ENCODE measurements at regions of chr2 and their contacts with region 1.

Region 1: DNA sequence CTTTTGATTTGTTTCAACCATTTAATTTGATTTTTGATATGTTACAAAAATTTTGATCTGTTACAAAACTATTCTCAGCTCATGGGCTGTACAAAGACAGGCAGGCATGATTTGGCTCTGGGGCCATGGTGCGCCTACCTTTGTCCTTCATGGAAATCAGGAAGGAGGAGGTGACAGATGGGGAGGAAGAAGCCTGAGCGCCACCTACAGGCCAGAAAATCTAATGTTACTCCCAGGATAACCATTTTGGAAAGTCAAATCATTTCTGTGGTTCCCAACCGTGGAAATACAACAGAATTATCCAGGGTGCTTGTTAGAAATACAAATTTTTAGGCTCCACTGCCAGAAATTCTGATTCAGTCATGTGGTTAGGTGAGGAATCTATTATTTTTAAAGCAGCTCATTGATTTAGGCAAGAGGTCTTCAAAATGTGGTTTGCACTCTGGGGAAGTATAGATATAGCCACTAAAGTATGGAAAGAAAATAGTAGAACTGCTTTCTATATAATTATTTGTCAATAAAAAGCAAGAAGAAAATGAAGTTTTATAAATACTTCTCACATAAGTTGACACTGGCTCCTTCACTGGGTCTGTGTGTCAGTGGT is 93.9 kb downstream of the EVA1A start:
- DNase-seq: peak; percentile 17
- ATAC-seq: no peak
- H3K4me3 Mint-ChIP-seq: no peak overlapping the region
- H3K27ac Mint-ChIP-seq: no peak overlapping the region
- H3K4me1 Mint-ChIP-seq: peaks cover 3% of the 10 kb centered on the region
- H3K27me3 Mint-ChIP-seq: peaks cover 13% of the 10 kb centered on the region
- CTCF ChIP-seq: peak; percentile 77

Region 2: DNA sequence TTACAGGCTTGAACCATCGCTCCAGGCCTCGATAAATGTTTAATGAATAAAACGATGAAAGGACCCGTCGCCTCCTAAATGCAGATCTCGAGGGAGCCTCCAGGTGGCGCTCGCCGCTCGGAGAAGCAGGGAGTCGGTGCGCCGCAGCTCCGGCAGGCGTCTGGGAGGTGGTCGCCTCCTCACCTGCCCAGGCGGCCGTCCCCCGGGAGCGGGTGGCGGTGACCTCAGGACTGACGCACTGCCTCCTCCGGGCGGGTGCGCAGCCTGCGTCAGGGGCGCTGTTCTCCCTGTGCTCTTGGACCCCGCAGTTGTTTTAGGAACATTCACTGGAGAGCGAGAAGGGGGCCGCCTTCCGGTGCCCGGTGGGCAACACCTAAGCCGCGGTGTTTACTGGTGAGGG is 547.0 kb before region 1 on chr2:
- CTCF ChIA-PET with region 1: interaction called, 3 read pairs
- POLR2A ChIA-PET with region 1: no interaction called
- intact Hi-C with region 1: loop called (anchors 1 kb)
- DNase-seq: peak; percentile 72
- ATAC-seq: peak; percentile 88
- H3K4me3 Mint-ChIP-seq: peak overlapping the region; percentile 42
- H3K27ac Mint-ChIP-seq: no peak overlapping the region
- H3K4me1 Mint-ChIP-seq: peaks cover 14% of the 10 kb centered on the region
- H3K27me3 Mint-ChIP-seq: peaks cover 10% of the 10 kb centered on the region
- CTCF ChIP-seq: peak; percentile 57

Region 3: DNA sequence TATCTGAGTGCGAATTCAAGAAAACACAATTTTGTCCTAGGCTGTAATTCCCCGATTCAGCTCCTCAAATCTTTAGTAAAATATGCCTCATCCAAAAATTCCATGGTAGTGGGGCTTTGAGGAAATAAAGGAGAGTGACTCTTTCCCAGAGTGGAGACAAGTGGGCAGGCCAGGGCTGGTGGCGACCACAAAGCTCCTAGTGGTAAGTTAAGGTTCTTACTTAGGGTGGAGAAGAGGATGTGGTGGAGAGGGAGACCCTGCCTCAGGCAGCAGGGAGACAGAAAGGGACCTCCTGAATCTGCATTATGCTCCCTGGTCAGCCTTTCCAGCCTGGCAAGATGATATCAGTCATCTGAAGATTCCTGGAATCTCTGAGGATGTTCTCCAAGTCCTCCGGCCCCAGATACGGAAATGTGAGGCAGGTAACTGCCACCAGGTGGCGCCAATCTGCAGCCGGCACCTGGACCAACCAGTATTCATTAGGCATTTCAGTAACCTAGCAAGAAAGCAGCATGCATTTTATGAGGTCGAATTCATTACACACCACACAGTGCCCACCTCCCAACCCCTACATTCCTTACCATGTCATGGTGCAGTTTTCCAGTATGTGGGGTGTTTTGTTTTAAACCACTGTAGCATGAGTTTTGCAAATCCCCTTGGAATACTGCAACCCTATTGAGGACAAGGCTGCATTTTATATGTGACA is 402.0 kb before region 1 on chr2:
- CTCF ChIA-PET with region 1: interaction called, 16 read pairs
- POLR2A ChIA-PET with region 1: no interaction called
- intact Hi-C with region 1: loop called (anchors 1 kb)
- DNase-seq: peak; percentile 42
- ATAC-seq: no peak
- H3K4me3 Mint-ChIP-seq: no peak overlapping the region
- H3K27ac Mint-ChIP-seq: no peak overlapping the region
- H3K4me1 Mint-ChIP-seq: no peaks in the 10 kb centered on the region
- H3K27me3 Mint-ChIP-seq: no peaks in the 10 kb centered on the region
- CTCF ChIP-seq: peak; percentile 56

Region 4: GRCh38 chr2:75311993-75312392 is 154.8 kb before region 1 on chr2:
- CTCF ChIA-PET with region 1: interaction called, 3 read pairs
- POLR2A ChIA-PET with region 1: no interaction called
- intact Hi-C with region 1: loop called (anchors 1 kb)
- DNase-seq: peak; percentile 38
- ATAC-seq: peak; percentile 100
- H3K4me3 Mint-ChIP-seq: no peak overlapping the region
- H3K27ac Mint-ChIP-seq: peak overlapping the region; percentile 3
- H3K4me1 Mint-ChIP-seq: peaks cover 17% of the 10 kb centered on the region
- H3K27me3 Mint-ChIP-seq: no peaks in the 10 kb centered on the region
- CTCF ChIP-seq: no peak

Region 5: GRCh38 chr2:75574114-75574513 is 107.3 kb after region 1 on chr2:
- CTCF ChIA-PET with region 1: no interaction called
- POLR2A ChIA-PET with region 1: no interaction called
- intact Hi-C with region 1: no loop called
- DNase-seq: no peak
- ATAC-seq: no peak
- H3K4me3 Mint-ChIP-seq: no peak overlapping the region
- H3K27ac Mint-ChIP-seq: no peak overlapping the region
- H3K4me1 Mint-ChIP-seq: no peaks in the 10 kb centered on the region
- H3K27me3 Mint-ChIP-seq: peaks cover 29% of the 10 kb centered on the region
- CTCF ChIP-seq: no peak

Region 6: DNA sequence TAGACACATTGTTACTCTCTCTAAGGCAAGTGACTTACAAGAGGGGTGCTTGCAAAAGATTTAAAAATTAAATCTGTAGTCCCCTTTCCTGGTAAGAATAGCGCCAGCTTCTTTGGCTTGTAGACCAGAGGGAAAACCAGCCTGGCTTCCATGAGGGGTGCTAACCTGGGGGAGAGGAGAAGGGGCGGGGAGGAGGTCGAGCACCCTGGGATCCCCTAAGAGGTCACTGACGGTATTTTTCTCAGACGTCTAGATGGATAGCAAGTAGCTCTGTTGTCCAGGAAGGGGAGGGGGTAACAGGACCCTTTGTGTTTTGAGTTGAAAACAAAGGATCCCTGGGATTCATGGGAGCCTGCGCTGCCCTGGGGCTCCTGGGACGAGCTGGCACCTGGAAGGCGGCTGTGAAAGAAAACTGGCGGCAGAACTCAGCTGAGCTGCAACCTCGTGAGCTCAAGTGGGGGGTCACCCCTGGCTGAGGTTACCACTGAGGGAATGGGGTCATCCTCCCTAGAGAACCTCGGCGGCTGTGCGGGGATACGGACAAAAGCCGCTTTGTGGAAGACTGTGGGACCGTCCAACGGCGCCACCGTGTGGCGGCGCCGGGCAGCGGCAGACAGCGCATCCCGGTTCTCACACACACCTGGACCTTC is 142.0 kb after region 1 on chr2:
- CTCF ChIA-PET with region 1: interaction called, 7 read pairs
- POLR2A ChIA-PET with region 1: no interaction called
- intact Hi-C with region 1: loop called (anchors 10 kb)
- DNase-seq: peak; percentile 50
- ATAC-seq: peak; percentile 78
- H3K4me3 Mint-ChIP-seq: no peak overlapping the region
- H3K27ac Mint-ChIP-seq: no peak overlapping the region
- H3K4me1 Mint-ChIP-seq: no peaks in the 10 kb centered on the region
- H3K27me3 Mint-ChIP-seq: peaks cover 59% of the 10 kb centered on the region
- CTCF ChIP-seq: peak; percentile 72